Dorsolateral prefrontal cortex (tissue), 120 donors: ENCODE measurements at regions of chrX and their contacts with region 1.

Region 1: GRCh38 chrX:115499112-115499805 is 61.7 kb upstream of the PLS3 start:
- DNase-seq: no peak
- H3K4me3 ChIP-seq: no peak overlapping the region
- H3K27ac ChIP-seq: no peak overlapping the region
- H3K27me3 ChIP-seq: peaks cover 0 to 86% (median 20%) of the 10 kb centered on the region in 45 donors
- CTCF ChIP-seq: no peak

Region 2: GRCh38 chrX:115400960-115401359 is 98.3 kb before region 1 on chrX:
- intact Hi-C with region 1: loop called in 1 of 2 experiments (anchors 10 kb)
- DNase-seq: peak in 1 of 10 donors; percentile 41
- H3K4me3 ChIP-seq: no peak overlapping the region
- H3K27ac ChIP-seq: peak overlapping the region in 4 of 59 donors; percentile 1 to 44 (median 18)
- H3K27me3 ChIP-seq: peaks cover 0 to 41% (median 9%) of the 10 kb centered on the region in 45 donors
- CTCF ChIP-seq: no peak

Region 3: GRCh38 chrX:115553171-115553570 is 53.9 kb after region 1 on chrX:
- intact Hi-C with region 1: loop called in 1 of 2 experiments (anchors 10 kb)
- DNase-seq: no peak
- H3K4me3 ChIP-seq: no peak overlapping the region
- H3K27ac ChIP-seq: peak overlapping the region in 3 of 59 donors; percentile 7 to 22 (median 12)
- H3K27me3 ChIP-seq: peaks cover 0 to 81% (median 25%) of the 10 kb centered on the region in 45 donors
- CTCF ChIP-seq: no peak

Region 4: DNA sequence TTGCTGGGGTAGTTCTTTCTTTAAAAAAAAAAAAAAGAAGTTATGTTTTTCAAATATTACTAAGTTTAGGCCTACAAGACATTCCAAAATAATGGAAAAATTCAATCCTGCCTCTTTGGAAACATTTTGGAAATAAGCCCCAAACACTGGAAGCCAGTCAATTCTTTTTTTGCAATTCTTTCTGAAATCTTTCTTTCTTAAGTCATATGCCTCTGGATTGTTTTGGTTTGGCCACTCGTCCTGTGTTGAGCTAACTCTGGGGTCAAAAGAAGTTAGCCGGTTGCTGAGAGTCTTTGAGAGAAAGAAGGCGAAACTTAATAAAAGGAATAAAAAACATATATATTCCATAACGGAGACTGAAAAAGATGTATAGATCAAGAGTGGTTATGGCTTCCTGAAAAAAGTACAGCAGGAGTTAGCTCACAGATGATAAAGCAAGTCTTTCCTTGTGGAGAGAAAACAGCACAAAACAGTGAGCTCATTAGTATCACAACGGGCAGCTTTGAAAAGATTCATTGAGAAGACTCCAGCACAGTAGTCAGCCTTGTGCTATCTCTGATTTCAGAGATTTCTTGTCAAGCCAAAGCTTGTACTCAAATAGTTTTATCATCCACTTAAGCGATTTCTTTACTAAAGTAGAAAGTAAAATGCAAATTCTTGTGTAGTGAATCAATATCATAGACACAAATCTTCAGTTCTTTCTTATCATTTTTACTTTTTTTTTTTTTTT is 126.5 kb after region 1 on chrX:
- intact Hi-C with region 1: loop called in 1 of 2 experiments (anchors 10 kb)
- DNase-seq: no peak
- H3K4me3 ChIP-seq: peak overlapping the region in 11 of 59 donors; percentile 1 to 33 (median 11)
- H3K27ac ChIP-seq: peak overlapping the region in 58 of 59 donors; percentile 6 to 92 (median 81)
- H3K27me3 ChIP-seq: peaks cover 0 to 86% (median 20%) of the 10 kb centered on the region in 45 donors
- CTCF ChIP-seq: no peak